Activated CD8-positive, alpha-beta T cell treated with anti-CD3 and anti-CD28 coated beads, Interleukin-2, amount 10 ng/mL, durations not matched to agents 7 days and 5 days (primary cell): ENCODE measurements at regions of chr21 and their contacts with region 1.

Region 1: GRCh38 chr21:42107881-42108553 is 36.9 kb downstream of the UMODL1 start:
- DNase-seq: peak; percentile 75
- ATAC-seq: peak; percentile 99
- H3K4me3 Mint-ChIP-seq: no peak overlapping the region
- H3K27ac Mint-ChIP-seq: no peak overlapping the region
- H3K4me1 Mint-ChIP-seq: peaks cover 11% of the 10 kb centered on the region
- H3K27me3 Mint-ChIP-seq: peaks cover 8% of the 10 kb centered on the region

Region 2: GRCh38 chr21:41877901-41878830 is 229.9 kb before region 1 on chr21:
- CTCF ChIA-PET with region 1: interaction called, 13 read pairs
- POLR2A ChIA-PET with region 1: no interaction called
- DNase-seq: peak; percentile 39
- ATAC-seq: peak; percentile 38
- H3K4me3 Mint-ChIP-seq: peak overlapping the region; percentile 81
- H3K27ac Mint-ChIP-seq: peak overlapping the region; percentile 78
- H3K4me1 Mint-ChIP-seq: peaks cover 23% of the 10 kb centered on the region
- H3K27me3 Mint-ChIP-seq: no peaks in the 10 kb centered on the region

Region 3: GRCh38 chr21:42009831-42010523 is 98.0 kb before region 1 on chr21 and contains the start of gene ZBTB21:
- CTCF ChIA-PET with region 1: interaction called, 32 read pairs
- POLR2A ChIA-PET with region 1: no interaction called
- DNase-seq: peak; percentile 99
- ATAC-seq: peak; percentile 92
- H3K4me3 Mint-ChIP-seq: peak within 1 kb of the TSS; percentile 95
- H3K27ac Mint-ChIP-seq: peak within 1 kb of the TSS; percentile 99
- H3K4me1 Mint-ChIP-seq: peaks cover 22% of the 10 kb centered on the region
- H3K27me3 Mint-ChIP-seq: peaks cover 23% of the 10 kb centered on the region
- total RNA-seq, gene ZBTB21: 19.5 to 23.6 TPM

Region 4: DNA sequence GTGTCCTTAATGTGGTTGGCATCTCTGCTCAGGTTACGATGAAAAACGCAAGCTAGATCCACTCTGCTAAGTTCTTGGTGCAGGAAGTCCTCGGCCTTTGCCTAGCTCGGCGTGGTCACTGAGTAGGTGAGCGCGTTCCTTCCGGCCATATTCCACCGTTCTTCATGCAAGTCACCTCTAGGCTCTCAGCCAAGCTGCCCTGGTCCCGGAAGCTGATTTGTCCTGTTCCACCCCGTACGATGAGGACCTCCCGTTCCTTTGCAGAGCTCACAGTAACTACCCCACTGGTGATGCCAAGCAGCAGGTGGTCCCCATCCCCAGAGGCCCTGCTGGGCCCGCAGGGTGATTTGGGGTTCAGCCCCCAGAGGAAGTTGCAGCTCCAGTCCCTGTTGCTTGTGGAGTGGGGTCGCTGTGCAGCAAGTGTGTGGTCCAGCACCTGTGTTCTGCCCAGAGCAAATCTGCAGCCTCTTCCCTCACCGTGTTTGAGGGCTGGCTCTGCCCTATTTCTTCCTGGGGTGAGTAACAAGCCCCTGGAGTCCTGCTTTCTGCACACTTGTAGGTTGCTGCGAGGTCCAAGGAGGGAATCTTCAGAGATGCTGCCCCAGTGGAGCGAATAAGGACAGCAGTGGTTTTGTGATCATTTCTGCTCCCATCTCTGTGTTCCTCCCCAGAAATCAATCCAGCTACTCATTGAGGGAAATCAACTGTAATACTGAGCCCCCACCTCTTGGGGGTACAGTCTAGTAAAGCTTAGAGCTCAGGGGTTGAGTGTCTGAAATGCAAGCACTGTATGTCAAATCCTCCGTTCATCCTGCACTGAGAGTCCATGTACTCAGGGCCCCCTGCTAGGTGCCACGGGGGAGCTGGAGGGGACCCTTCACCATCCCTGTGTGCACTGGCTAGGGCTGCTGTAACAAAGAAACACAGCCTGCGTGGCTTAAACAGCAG is 34.6 kb before region 1 on chr21:
- CTCF ChIA-PET with region 1: interaction called, 15 read pairs
- POLR2A ChIA-PET with region 1: no interaction called
- DNase-seq: no peak
- ATAC-seq: no peak
- H3K4me3 Mint-ChIP-seq: no peak overlapping the region
- H3K27ac Mint-ChIP-seq: no peak overlapping the region
- H3K4me1 Mint-ChIP-seq: peaks cover 7% of the 10 kb centered on the region
- H3K27me3 Mint-ChIP-seq: peaks cover 3% of the 10 kb centered on the region

Region 5: DNA sequence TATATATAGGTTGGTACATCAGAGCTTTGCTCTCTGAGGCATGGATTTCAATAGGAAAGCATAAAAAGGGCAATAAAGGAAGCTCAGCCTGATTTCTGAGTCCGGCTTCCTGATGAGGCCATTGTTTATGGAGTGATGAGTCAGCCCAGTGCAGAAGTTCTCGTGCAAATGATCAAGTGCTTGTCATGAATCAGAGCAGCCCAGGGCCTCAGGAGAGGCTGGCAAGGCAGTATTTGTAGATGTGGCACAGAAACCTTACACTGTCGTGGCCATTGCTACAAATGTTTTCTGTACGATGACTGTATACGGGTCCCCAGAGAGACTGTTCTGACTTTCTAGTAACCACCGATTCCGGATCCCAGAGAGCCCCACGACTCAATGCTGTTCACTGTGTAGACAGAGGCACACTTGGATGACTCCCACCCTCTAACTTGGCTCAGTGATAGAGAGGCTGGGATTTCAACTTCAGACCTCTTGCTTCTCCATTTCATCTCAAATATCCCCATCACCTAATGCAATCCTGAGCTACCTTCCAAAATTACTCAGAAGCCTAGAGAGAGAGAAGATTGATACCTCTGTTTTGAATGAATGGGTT is 10.1 kb before region 1 on chr21:
- CTCF ChIA-PET with region 1: interaction called, 12 read pairs
- POLR2A ChIA-PET with region 1: no interaction called
- DNase-seq: no peak
- ATAC-seq: no peak
- H3K4me3 Mint-ChIP-seq: no peak overlapping the region
- H3K27ac Mint-ChIP-seq: no peak overlapping the region
- H3K4me1 Mint-ChIP-seq: peaks cover 8% of the 10 kb centered on the region
- H3K27me3 Mint-ChIP-seq: peaks cover 9% of the 10 kb centered on the region